Activated CD4-positive, alpha-beta T cell treated with anti-CD3 and anti-CD28 coated beads for 36 hours (primary cell): ENCODE measurements at regions of chr3 and their contacts with region 1.

Region 1: DNA sequence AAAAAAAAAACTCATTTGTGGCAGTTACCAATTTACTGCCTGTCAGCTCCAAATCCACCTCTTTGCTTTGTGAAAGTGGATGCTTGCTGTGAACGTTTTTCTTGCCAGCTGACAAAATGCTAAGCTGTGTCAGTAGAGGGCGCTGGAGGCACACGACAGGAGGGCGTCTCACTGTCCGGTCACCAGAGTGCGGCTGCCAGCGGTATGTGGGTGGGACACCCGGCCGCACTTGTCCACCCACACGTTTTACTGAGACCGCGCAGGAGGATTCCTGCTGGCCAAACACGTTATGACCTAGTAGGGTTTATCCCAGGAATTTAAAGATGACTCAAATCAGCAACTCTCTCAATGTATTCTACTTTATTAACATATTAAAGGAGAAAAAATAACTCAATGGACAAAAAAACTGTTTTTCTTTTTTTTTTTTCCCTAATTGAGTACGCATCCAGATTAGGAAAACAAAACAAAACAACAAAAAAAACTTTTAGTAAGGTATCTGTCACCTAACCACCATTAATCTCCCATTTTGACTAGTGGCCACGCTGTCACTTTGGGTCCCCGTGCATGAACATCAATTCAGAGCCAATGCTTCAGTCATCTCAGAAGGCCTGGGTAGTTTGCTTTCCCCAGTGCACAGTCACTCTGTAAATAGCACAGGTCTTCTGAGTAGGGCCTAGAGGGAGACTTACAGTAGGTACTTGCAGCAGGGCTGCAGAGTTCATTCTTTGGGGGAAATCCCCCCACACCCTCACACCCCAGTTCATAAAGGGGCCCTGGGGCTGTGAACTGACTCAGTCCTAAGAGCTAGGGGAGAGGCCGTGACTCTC is 43.8 kb upstream of the RPL35A start:
- DNase-seq: peak; percentile 93
- ATAC-seq: peak; percentile 99
- H3K4me3 Mint-ChIP-seq: peak overlapping the region; percentile 41
- H3K27ac Mint-ChIP-seq: peak overlapping the region; percentile 86
- H3K4me1 Mint-ChIP-seq: peaks cover 25% of the 10 kb centered on the region
- H3K27me3 Mint-ChIP-seq: no peaks in the 10 kb centered on the region

Region 2: GRCh38 chr3:197736491-197737318 is 169.5 kb before region 1 on chr3 and contains the start of gene RUBCN:
- CTCF ChIA-PET with region 1: no interaction called
- POLR2A ChIA-PET with region 1: no interaction called
- intact Hi-C with region 1: loop called in 1 of 2 experiments (anchors 1 kb)
- DNase-seq: peak; percentile 97
- ATAC-seq: peak; percentile 97
- H3K4me3 Mint-ChIP-seq: peak within 1 kb of the TSS; percentile 85
- H3K27ac Mint-ChIP-seq: peak within 1 kb of the TSS; percentile 95
- H3K4me1 Mint-ChIP-seq: peaks cover 32% of the 10 kb centered on the region
- H3K27me3 Mint-ChIP-seq: no peaks in the 10 kb centered on the region
- total RNA-seq, gene RUBCN: 22.7 to 23.4 TPM

Region 3: GRCh38 chr3:197811343-197811742 is 94.9 kb before region 1 on chr3:
- CTCF ChIA-PET with region 1: no interaction called
- POLR2A ChIA-PET with region 1: no interaction called
- intact Hi-C with region 1: no loop called
- DNase-seq: no peak
- ATAC-seq: no peak
- H3K4me3 Mint-ChIP-seq: no peak overlapping the region
- H3K27ac Mint-ChIP-seq: no peak overlapping the region
- H3K4me1 Mint-ChIP-seq: peaks cover 33% of the 10 kb centered on the region
- H3K27me3 Mint-ChIP-seq: no peaks in the 10 kb centered on the region

Region 4: GRCh38 chr3:197878427-197878826 is 27.8 kb before region 1 on chr3:
- CTCF ChIA-PET with region 1: interaction called, 6 read pairs
- POLR2A ChIA-PET with region 1: no interaction called
- intact Hi-C with region 1: loop called (anchors 1 kb)
- DNase-seq: peak; percentile 91
- ATAC-seq: peak; percentile 91
- H3K4me3 Mint-ChIP-seq: peak overlapping the region; percentile 35
- H3K27ac Mint-ChIP-seq: peak overlapping the region; percentile 88
- H3K4me1 Mint-ChIP-seq: peaks cover 29% of the 10 kb centered on the region
- H3K27me3 Mint-ChIP-seq: no peaks in the 10 kb centered on the region

Region 5: GRCh38 chr3:197926418-197926817 is 20.2 kb after region 1 on chr3:
- CTCF ChIA-PET with region 1: interaction called, 5 read pairs
- POLR2A ChIA-PET with region 1: no interaction called
- intact Hi-C with region 1: loop called (anchors 1 to 2 kb)
- DNase-seq: peak; percentile 43
- ATAC-seq: no peak
- H3K4me3 Mint-ChIP-seq: no peak overlapping the region
- H3K27ac Mint-ChIP-seq: no peak overlapping the region
- H3K4me1 Mint-ChIP-seq: peaks cover 6% of the 10 kb centered on the region
- H3K27me3 Mint-ChIP-seq: no peaks in the 10 kb centered on the region

Region 6: DNA sequence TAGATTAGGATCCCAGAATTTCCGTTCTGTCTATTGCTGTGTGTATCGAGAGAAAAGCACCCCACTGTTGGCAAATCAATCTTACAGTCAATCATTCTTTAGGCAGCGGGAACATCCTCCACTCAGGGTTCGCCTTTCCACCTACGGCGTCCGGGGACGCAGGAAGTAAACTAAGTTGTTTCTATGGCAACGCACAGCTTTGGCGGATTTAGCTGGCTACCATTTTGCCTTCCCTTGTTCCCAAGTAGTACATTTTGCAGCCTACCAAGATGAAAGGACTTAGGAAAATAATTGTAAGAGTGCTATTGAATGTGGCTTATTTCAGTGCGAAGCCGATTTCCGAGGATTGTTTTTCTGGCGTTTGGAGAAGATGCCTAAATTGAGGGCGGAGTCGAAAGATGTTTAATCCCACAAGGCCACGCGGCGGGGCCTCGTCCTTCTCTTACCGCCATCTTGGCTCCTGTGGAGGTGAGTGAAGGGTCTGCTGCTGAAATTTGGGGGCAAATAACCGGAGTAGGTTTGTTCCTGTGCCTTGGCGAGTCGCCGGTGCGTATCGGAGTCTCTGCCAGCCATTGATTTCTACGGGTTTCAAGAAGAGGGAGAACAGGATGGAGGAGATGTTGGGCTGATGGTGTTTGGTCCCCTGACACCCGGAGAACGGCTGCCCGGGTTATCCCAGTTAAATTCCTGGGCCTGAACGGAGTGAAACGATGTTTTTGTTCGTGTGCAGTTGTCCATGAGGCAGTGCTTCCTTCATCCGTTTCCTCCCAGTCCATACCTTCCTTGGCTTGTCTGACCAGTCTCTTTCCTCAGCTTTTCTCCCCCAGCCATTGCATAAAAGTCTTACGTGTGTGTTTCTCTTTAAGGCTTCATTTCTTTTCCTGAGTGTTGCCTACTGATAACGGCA is 43.8 kb after region 1 on chr3 and contains the start of gene RPL35A:
- CTCF ChIA-PET with region 1: interaction called, 8 read pairs
- POLR2A ChIA-PET with region 1: interaction called, 5 read pairs
- intact Hi-C with region 1: loop called (anchors 1 kb)
- DNase-seq: peak; percentile 90
- ATAC-seq: peak; percentile 89
- H3K4me3 Mint-ChIP-seq: peak within 1 kb of the TSS; percentile 87
- H3K27ac Mint-ChIP-seq: peak within 1 kb of the TSS; percentile 97
- H3K4me1 Mint-ChIP-seq: peaks cover 47% of the 10 kb centered on the region
- H3K27me3 Mint-ChIP-seq: no peaks in the 10 kb centered on the region
- total RNA-seq, gene RPL35A: 1,121 to 1,734 TPM

Region 7: DNA sequence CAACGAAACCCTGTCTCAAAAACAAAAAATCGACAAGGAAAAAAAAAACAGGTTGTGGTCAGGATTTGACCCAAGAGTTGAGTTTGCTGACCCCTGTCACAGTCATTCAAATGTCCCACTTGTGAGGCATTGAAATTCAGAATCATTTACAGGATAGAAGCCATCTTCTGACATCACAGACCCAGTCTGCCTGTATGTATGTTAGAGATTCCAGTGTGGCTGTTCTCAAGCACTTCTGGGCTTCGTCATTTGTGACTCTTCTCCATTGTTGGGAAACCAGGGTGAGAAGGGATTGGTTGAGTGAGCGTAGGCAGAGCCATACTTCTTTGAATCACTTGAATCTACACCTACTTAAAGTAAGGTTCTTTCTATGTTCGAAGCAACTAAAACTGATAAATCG is 110.9 kb after region 1 on chr3:
- CTCF ChIA-PET with region 1: no interaction called
- POLR2A ChIA-PET with region 1: no interaction called
- intact Hi-C with region 1: no loop called
- DNase-seq: no peak
- ATAC-seq: no peak
- H3K4me3 Mint-ChIP-seq: no peak overlapping the region
- H3K27ac Mint-ChIP-seq: no peak overlapping the region
- H3K4me1 Mint-ChIP-seq: no peaks in the 10 kb centered on the region
- H3K27me3 Mint-ChIP-seq: no peaks in the 10 kb centered on the region

Region 8: GRCh38 chr3:198062068-198062465 is 155.8 kb after region 1 on chr3:
- CTCF ChIA-PET with region 1: interaction called, 4 read pairs
- POLR2A ChIA-PET with region 1: interaction called, 3 read pairs
- intact Hi-C with region 1: loop called in 1 of 2 experiments (anchors 1 kb)
- DNase-seq: no peak
- ATAC-seq: no peak
- H3K4me3 Mint-ChIP-seq: no peak overlapping the region
- H3K27ac Mint-ChIP-seq: no peak overlapping the region
- H3K4me1 Mint-ChIP-seq: peaks cover 22% of the 10 kb centered on the region
- H3K27me3 Mint-ChIP-seq: peaks cover 16% of the 10 kb centered on the region

Region 9: DNA sequence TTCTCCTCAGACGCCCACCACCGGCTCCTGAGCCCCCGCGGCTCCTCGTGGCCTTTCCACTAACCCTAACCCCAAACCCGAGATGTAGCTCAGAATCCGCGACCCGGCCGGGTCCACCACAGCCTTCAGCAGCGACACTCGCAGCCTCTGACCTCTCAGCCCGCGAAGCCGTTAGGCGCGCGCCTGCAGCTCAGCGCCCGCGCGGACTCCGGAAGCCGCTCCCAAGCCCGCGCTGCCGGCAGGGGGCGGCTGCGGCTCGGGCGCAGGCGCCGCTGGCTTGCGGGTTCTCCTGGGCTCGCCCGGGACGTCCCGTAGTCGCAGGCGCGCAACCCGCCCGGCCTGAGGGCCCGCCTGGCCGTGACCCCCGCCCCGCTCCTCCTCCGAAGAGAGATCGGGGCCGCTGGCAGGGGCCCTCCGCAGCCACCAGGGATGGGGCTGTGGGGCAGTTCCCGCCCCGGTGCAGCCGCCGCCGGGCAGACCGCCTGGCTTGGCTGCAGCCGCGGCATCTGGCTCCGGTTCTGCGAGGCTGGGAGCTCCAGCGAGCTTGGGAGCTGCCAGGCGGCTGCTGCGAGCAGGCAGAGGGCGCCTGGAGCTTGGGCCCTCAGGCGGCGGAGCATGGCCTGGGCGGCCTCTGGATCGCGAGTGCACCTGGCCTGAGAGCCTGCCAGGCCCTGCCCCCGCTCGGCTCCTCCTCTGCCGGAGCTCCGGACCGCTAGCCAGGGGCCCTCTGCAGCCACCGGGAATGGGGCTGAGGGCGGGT is 174.5 kb after region 1 on chr3:
- CTCF ChIA-PET with region 1: interaction called, 7 read pairs
- POLR2A ChIA-PET with region 1: interaction called, 5 read pairs
- intact Hi-C with region 1: loop called in 1 of 2 experiments (anchors 1 kb)
- DNase-seq: peak; percentile 90
- ATAC-seq: peak; percentile 80
- H3K4me3 Mint-ChIP-seq: peak overlapping the region; percentile 85
- H3K27ac Mint-ChIP-seq: peak overlapping the region; percentile 93
- H3K4me1 Mint-ChIP-seq: peaks cover 22% of the 10 kb centered on the region
- H3K27me3 Mint-ChIP-seq: peaks cover 40% of the 10 kb centered on the region